Esophagus muscularis mucosa (tissue), 4 donors: ENCODE measurements at regions of chr6 and their contacts with region 1.

Region 1: DNA sequence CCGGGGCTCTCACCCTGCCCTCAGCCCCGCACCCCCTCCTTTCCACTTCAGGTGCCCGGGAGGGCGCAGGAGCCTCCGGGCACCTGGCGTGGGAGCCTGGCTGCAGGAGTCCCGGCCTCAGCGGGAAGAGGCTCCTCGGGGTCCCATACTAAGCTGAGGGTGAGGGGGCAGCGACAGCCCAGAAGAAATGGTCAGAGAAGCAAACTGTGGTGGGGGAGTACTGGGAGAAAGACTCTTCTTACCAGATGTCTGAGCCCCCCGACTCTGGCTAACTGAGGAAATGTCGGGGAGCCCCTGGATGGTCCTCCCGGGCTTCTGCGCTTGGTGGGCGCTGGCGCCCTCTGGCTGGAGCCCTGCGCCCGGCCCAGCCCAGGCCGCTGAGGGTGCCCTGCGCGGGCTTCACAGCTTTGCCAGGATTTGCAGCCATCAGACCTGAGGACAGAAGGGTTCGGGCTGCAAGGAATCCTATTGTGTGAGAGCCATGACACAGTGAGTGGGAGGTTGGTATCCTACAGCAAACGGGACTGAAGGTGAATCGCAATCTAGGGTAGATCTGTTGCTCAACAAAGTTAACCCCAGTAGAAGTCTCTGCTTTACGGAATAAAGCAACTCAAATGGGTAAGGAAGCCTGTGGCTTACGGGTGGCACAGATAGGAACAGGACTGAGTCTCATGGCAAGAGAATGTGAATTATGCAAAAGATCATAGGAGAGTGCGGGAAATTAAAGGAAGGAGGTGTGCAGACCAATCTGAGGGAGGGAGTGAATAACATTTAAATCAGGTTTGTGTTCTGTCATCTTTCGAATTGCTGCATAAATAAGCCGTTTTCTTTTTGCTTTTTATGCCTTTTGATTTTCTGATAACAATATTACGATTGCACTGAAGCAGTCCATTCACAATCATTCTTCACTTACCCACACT is 639 bp upstream of the RCAN2 start:
- DNase-seq: no peak
- H3K4me3 ChIP-seq: peak overlapping the region; percentile 64 to 83 (median 82)
- H3K27ac ChIP-seq: peak overlapping the region; percentile 78 to 89 (median 86)
- H3K4me1 ChIP-seq: peaks cover 5 to 26% (median 19%) of the 10 kb centered on the region in 4 donors
- H3K27me3 ChIP-seq: no peaks in the 10 kb centered on the region
- CTCF ChIP-seq: peak; percentile 67 to 80 (median 70)
- EP300 ChIP-seq: no peak
- POLR2A ChIP-seq: no peak

Region 2: GRCh38 chr6:46419576-46420002 is 72.3 kb before region 1 on chr6:
- intact Hi-C with region 1: loop called (anchors 2 kb)
- DNase-seq: no peak
- H3K4me3 ChIP-seq: no peak overlapping the region
- H3K27ac ChIP-seq: no peak overlapping the region
- H3K4me1 ChIP-seq: peaks cover 0 to 25% (median 10%) of the 10 kb centered on the region in 4 donors
- H3K27me3 ChIP-seq: no peaks in the 10 kb centered on the region
- CTCF ChIP-seq: peak; percentile 74 to 82 (median 78)
- EP300 ChIP-seq: no peak
- POLR2A ChIP-seq: no peak